ENCODE measurements at regions of chr2 and their contacts with region 1.

Region 1: DNA sequence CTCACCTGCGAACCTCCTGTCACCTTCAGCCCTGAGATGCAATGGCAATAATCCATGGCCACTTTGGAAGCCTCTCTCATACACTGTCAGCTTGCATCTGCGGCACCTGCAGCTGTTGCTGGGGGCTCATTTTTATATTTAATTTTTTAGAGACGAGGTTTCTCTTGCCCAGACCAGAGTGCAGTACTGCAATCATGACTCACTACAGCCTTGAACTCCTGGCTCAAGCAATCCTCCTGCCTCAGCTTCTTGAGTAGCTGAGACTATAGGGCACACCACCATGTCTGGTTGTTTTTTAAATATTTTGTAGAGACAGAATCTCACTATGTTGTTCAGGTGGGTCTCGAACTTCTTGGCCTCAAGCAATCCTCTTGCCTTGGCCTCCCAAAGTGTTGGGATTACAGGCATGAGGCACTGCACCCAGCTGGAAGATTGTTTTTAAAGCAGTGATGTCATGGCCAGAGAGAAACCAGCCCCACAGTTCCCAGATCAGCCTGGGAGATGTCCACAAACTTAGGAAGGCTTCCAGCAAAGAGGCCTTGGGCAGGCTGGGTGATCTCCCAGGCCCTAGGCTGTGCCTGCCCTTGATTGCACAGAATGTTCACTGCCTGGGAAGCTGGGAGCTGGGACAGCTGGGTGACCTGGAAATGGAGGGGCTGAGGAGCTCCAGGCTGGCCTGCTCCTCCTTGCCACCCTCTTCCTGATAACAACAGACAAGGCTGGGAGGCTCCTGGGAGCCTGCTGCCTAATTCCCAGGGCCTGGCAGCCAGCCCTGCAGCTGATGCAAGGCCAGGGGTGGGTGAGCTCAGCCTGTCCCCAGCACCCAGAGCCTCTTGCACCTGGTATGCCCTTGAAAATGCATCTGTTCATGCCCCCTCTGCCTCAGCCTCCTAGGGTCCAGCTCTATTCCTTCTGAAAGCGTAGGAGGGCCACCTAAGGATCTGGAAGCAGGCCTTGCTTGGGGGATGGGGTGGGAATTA is 27.1 kb downstream of the SH2D6 start:
- DNase-seq: peak in 2 of 5 donors; percentile 62 to 76
- ATAC-seq: peak; percentile 48 to 84 (median 76)
- H3K4me3 ChIP-seq: no peak overlapping the region
- H3K27ac ChIP-seq: peak overlapping the region; percentile 14 to 83 (median 70)
- H3K4me1 ChIP-seq: peaks cover 0 to 27% (median 10%) of the 10 kb centered on the region in 12 donors
- H3K27me3 ChIP-seq: no peaks in the 10 kb centered on the region
- CTCF ChIP-seq: no peak
- POLR2A ChIP-seq: no peak

Region 2: GRCh38 chr2:85490861-85491755 is 45.5 kb after region 1 on chr2:
- intact Hi-C with region 1: loop called in 1 of 10 experiments (anchors 10 kb)
- DNase-seq: no peak
- ATAC-seq: peak in 1 of 4 donors; percentile 27
- H3K4me3 ChIP-seq: no peak overlapping the region
- H3K27ac ChIP-seq: no peak overlapping the region
- H3K4me1 ChIP-seq: no peaks in the 10 kb centered on the region
- H3K27me3 ChIP-seq: no peaks in the 10 kb centered on the region
- CTCF ChIP-seq: no peak
- POLR2A ChIP-seq: no peak

Region 3: GRCh38 chr2:85524336-85524933 is 78.8 kb after region 1 on chr2:
- intact Hi-C with region 1: loop called in 1 of 10 experiments (anchors 5 kb)
- DNase-seq: peak in 1 of 5 donors; percentile 58
- ATAC-seq: peak; percentile 53 to 84 (median 77)
- H3K4me3 ChIP-seq: no peak overlapping the region
- H3K27ac ChIP-seq: peak overlapping the region in 11 of 12 donors; percentile 10 to 82 (median 63)
- H3K4me1 ChIP-seq: peaks cover 0 to 22% (median 14%) of the 10 kb centered on the region in 12 donors
- H3K27me3 ChIP-seq: no peaks in the 10 kb centered on the region
- CTCF ChIP-seq: no peak
- POLR2A ChIP-seq: no peak